ENCODE measurements at regions of chr6 and their contacts with region 1.

Region 1: DNA sequence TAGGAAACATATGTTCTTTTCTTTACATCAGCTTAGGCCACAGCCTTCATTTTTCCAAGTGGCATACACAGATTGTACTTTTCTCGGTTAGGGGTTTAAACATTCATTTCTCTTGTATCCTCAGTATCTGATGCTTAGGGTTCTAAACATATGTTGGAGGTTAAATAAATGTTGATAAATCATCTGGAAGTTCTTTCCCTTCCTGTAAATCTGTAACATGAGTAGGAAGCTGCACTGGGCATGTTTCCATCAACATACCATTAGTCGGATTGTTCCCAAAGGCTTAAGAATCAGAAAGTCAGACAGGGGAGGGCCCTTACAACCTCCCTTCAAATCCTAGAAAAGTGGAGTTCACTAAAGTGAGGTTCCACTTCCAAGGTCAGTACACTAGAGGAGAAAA is 54.8 kb upstream of the BCLAF1 start:
- DNase-seq: no peak
- H3K4me3 ChIP-seq: no peak overlapping the region
- H3K4me1 ChIP-seq: no peaks in the 10 kb centered on the region
- H3K27me3 ChIP-seq: no peaks in the 10 kb centered on the region

Region 2: DNA sequence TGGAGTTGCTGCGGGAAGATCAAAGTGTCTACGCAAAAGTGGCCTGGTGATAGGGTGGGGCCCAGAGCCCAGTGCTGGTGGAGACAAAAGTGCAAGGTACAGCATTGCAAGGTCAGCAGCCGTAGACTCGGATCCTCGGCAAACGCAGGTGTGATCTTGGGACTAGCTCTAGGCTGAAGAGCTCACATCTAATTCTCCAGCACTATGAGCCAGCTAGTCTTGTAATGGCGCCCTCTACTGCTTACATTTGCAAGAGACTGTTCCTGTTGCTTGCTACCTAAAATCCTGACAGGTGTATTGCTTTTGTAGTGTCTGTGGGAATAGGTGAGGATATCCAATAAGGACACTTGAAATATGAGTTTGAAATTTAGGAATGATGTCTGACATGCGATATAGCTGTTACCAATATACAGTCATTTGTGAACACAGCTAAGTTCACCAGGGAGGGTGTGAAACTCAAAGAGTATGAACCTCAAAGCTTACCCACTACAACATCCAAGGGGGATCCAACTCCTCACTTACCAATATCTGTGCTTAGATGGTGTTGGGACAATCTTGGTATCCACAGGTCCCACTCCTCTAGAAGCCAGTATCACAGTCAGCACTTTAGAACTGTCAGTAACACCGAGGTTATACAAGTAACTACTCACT is 434.6 kb before region 1 on chr6:
- in situ Hi-C with region 1: no loop called
- DNase-seq: peak; percentile 60 to 70
- H3K4me3 ChIP-seq: no peak overlapping the region
- H3K4me1 ChIP-seq: peaks cover 4% of the 10 kb centered on the region; the same call in 1 of the 2 replicates
- H3K27me3 ChIP-seq: no peaks in the 10 kb centered on the region

Region 3: GRCh38 chr6:136173519-136174507 is 170.6 kb before region 1 on chr6:
- in situ Hi-C with region 1: no loop called
- DNase-seq: no peak
- H3K4me3 ChIP-seq: no peak overlapping the region
- H3K4me1 ChIP-seq: no peaks in the 10 kb centered on the region
- H3K27me3 ChIP-seq: peaks cover 7% of the 10 kb centered on the region

Region 4: DNA sequence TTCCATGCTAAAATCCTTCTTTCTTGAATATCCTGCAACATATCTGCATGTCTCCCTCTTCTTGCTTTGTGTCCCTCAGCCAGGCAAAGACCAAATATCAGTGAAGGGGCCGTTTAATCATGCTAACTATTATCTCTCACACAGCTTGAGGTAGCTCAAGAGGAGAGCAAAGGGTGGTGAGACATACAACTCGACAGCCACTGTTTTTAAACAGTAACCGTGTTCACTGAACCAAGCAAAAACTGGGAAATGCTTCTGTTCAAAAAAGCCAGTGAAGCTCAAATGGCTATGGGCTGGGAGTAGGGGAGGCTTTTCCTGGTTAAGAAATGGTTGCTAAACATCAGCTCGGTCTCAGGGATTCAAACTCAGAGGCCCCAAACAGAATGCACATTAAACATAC is 122.4 kb after region 1 on chr6:
- in situ Hi-C with region 1: no loop called
- DNase-seq: no peak
- H3K4me3 ChIP-seq: no peak overlapping the region
- H3K4me1 ChIP-seq: peaks cover 4% of the 10 kb centered on the region; the same call in 1 of the 2 replicates
- H3K27me3 ChIP-seq: no peaks in the 10 kb centered on the region

Region 5: DNA sequence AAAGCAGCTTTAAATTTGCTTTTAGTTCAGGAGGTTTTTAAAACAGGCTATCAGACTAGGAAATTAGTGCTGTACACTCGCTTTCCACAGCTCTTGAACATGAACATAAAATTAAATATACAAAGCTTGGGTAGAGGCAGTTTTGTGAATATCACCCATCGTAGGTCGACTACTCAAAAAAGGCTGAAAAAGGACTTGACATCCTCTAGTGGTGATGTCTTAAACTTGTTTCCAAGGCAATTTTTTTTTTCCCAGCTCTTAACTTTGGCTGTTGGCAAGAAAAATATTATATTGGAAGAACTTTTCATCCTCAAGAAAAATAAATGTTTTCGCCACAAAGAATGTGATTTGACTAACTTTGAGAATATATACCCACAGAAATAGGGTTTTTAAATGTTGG is 202.9 kb after region 1 on chr6:
- in situ Hi-C with region 1: loop called (anchors 10 kb)
- DNase-seq: peak in 1 of 2 experiments; percentile 76
- H3K4me3 ChIP-seq: no peak overlapping the region
- H3K4me1 ChIP-seq: peaks cover 12% of the 10 kb centered on the region
- H3K27me3 ChIP-seq: no peaks in the 10 kb centered on the region

Measured in HAP-1 (cell line).